Activated T-helper 2 cell treated with anti-CD3 and anti-CD28 coated beads, Interferon-gamma antibody, Interleukin-2, Interleukin-4, amounts not matched to agents 10 μg/mL and 5 μg/mL and 100 μg/mL, durations not matched to agents 14 hours and 24 hours and 36 hours (primary cell): ENCODE measurements at regions of chr2 and their contacts with region 1.

Region 1: GRCh38 chr2:234494361-234495250 is 2.3 kb downstream of the ARL4C start:
- DNase-seq: no peak
- H3K4me3 Mint-ChIP-seq: peak overlapping the region; percentile 97
- H3K27ac Mint-ChIP-seq: peak overlapping the region; percentile 96
- H3K4me1 Mint-ChIP-seq: peaks cover 52% of the 10 kb centered on the region
- H3K27me3 Mint-ChIP-seq: no peaks in the 10 kb centered on the region

Region 2: DNA sequence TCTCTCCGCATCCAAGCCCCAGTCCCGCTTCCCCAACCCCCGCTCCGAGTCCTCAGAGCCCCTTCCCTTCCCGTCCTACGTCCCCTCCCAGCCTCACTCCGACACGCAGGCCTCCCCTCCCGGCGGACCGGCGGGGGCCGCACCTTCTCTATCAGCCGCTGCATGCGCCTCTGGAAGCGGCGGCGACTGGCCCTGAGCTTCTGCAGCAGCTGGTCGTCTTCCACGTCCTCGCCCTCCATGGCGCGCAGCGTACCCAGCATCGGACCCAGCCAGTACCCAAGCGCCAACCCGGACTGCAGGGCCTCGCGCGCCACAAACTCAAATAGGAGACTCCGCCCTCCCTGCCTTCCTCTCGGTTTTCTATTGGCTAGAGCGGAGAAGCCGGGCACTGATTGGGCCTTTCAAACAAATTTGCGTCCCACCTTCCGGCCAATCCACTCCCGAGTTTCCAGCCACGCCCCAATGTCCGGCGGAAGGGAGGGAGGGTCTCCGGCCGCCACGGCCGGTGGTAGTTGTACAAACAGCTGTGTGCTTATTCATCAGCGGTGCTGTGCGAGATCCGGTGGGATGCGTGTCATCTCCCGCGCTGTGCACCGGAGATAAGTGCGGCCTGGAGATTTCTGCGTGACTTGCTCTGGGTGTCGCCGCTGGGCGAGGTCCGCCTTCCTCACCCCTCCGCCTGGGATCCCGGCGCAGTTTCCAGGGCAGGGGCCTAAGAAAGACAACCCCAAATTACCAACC is 640.2 kb before region 1 on chr2 and contains the start of gene HJURP:
- intact Hi-C with region 1: loop called (anchors 5 kb)
- DNase-seq: peak; percentile 94
- H3K4me3 Mint-ChIP-seq: peak within 1 kb of the TSS; percentile 97
- H3K27ac Mint-ChIP-seq: peak within 1 kb of the TSS; percentile 95
- H3K4me1 Mint-ChIP-seq: peaks cover 45% of the 10 kb centered on the region
- H3K27me3 Mint-ChIP-seq: peaks cover 2% of the 10 kb centered on the region
- total RNA-seq, gene HJURP: 50.5 and 52.4 TPM in 2 replicates

Region 3: GRCh38 chr2:234269769-234270204 is 224.8 kb before region 1 on chr2:
- intact Hi-C with region 1: loop called (anchors 1 kb)
- DNase-seq: no peak
- H3K4me3 Mint-ChIP-seq: no peak overlapping the region
- H3K27ac Mint-ChIP-seq: no peak overlapping the region
- H3K4me1 Mint-ChIP-seq: peaks cover 75% of the 10 kb centered on the region
- H3K27me3 Mint-ChIP-seq: no peaks in the 10 kb centered on the region

Region 4: GRCh38 chr2:234308813-234309195 is 185.8 kb before region 1 on chr2:
- intact Hi-C with region 1: loop called (anchors 1 kb)
- DNase-seq: peak; percentile 78
- H3K4me3 Mint-ChIP-seq: peak overlapping the region; percentile 51
- H3K27ac Mint-ChIP-seq: peak overlapping the region; percentile 96
- H3K4me1 Mint-ChIP-seq: peaks cover 60% of the 10 kb centered on the region
- H3K27me3 Mint-ChIP-seq: no peaks in the 10 kb centered on the region

Region 5: DNA sequence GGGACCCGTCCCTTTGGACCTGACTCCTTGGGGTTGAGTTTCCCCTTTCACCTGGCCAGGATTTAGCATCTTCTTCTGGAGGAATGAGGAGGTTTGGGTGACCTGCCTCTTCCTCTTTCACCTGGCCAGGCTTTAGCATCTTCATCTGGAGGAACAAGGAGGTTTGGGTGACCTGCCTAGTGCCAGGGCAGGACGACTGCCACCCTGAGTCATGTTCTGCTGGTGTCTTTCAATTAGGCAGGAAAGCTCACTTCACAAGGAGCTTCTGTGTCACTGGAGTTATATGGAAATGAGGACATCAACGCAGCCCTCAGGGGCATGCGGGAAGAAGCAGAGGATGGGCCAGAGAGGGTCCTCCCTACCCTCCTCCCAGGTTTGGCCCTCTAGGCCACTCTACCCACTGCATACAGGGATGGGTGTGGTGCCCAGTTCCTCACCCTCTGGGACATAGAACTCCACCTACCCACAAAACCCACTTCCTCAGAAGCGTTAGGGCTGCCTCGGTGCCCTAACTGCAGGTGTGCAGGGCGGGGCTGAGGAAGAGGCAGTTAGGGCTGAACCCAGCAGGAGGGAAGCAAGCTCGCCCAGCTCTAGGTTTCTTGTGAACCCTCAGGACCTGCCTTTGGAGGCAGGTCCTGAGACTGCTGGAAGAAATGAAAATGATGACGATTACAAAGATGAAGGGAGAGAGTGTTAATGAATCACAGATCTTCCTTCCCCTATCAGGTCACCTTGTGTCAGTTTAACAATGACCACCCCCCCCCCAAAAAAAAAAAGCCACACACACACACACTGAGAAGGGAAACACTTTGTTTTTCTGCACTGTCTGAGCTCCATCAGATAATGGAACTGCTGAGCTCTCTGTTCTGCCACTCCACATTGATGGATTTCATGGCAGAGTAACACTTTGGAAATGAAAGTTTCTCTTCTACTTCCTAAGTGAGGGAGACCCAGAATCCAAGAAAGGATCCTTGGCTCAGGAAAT is 68.7 kb before region 1 on chr2:
- intact Hi-C with region 1: loop called (anchors 1 kb)
- DNase-seq: peak; percentile 80
- H3K4me3 Mint-ChIP-seq: peak overlapping the region; percentile 69
- H3K27ac Mint-ChIP-seq: peak overlapping the region; percentile 95
- H3K4me1 Mint-ChIP-seq: peaks cover 77% of the 10 kb centered on the region
- H3K27me3 Mint-ChIP-seq: no peaks in the 10 kb centered on the region

Region 6: GRCh38 chr2:234463626-234464290 is 30.8 kb before region 1 on chr2:
- intact Hi-C with region 1: loop called (anchors 1 kb)
- DNase-seq: peak; percentile 76
- H3K4me3 Mint-ChIP-seq: peak overlapping the region; percentile 81
- H3K27ac Mint-ChIP-seq: peak overlapping the region; percentile 91
- H3K4me1 Mint-ChIP-seq: peaks cover 57% of the 10 kb centered on the region
- H3K27me3 Mint-ChIP-seq: no peaks in the 10 kb centered on the region